Adrenal gland (tissue), 19 donors: ENCODE measurements at regions of chr22 and their contacts with region 1.

Region 1: GRCh38 chr22:40024201-40025061 is 29.7 kb downstream of the FAM83F start:
- DNase-seq: peak; percentile 62 to 82 (median 74)
- H3K4me3 ChIP-seq: no peak overlapping the region
- H3K27ac ChIP-seq: no peak overlapping the region
- H3K4me1 ChIP-seq: peaks cover 0 to 5% of the 10 kb centered on the region in 2 donors
- H3K27me3 ChIP-seq: no peaks in the 10 kb centered on the region
- CTCF ChIP-seq: peak; percentile 77 to 89 (median 85)
- POLR2A ChIP-seq: no peak

Region 2: GRCh38 chr22:39532215-39533071 is 492.0 kb before region 1 on chr22 and contains the start of gene RPS19BP1:
- intact Hi-C with region 1: loop called (anchors 2 to 5 kb)
- DNase-seq: peak; percentile 99 to 100 (median 100)
- H3K4me3 ChIP-seq: peak within 1 kb of the TSS; percentile 51 to 78 (median 64)
- H3K27ac ChIP-seq: peak within 1 kb of the TSS; percentile 49 to 91 (median 87)
- H3K4me1 ChIP-seq: peaks cover 18 to 54% of the 10 kb centered on the region in 2 donors
- H3K27me3 ChIP-seq: no peaks in the 10 kb centered on the region
- CTCF ChIP-seq: peak in 1 of 6 experiments; percentile 23
- POLR2A ChIP-seq: peak; percentile 58 to 86
- total RNA-seq, gene RPS19BP1: 80.4 to 250 (median 139) TPM

Region 3: DNA sequence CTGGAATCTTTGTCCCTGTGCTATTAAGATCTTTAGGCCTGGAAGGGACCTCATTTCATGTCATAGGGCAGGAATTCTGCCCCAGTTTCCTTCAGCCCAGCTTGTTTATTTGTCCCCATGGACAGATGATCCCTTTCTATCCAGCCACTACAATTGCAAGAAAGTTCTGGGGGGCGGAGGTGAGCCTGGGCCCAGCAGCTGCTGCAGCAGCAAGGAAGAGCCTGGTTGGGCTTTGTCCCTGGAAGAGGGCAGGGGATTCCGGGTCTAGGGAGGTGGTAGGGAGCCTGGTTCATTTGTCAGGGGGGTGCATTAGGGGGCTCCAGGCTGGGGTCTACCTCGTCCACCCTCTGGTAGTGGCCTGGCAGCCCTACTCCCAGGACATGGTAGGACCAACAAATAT is 470.3 kb before region 1 on chr22:
- intact Hi-C with region 1: loop called in 1 of 2 experiments (anchors 5 kb)
- DNase-seq: no peak
- H3K4me3 ChIP-seq: no peak overlapping the region
- H3K27ac ChIP-seq: no peak overlapping the region
- H3K4me1 ChIP-seq: peaks cover 0 to 10% of the 10 kb centered on the region in 2 donors
- H3K27me3 ChIP-seq: peaks cover 5% of the 10 kb centered on the region
- CTCF ChIP-seq: no peak
- POLR2A ChIP-seq: no peak

Region 4: GRCh38 chr22:39622881-39623367 is 401.5 kb before region 1 on chr22:
- intact Hi-C with region 1: loop called in 1 of 2 experiments (anchors 5 kb)
- DNase-seq: peak; percentile 28 to 67 (median 54)
- H3K4me3 ChIP-seq: no peak overlapping the region
- H3K27ac ChIP-seq: no peak overlapping the region
- H3K4me1 ChIP-seq: no peaks in the 10 kb centered on the region
- H3K27me3 ChIP-seq: no peaks in the 10 kb centered on the region
- CTCF ChIP-seq: peak; percentile 24 to 54 (median 46)
- POLR2A ChIP-seq: no peak